ENCODE measurements at regions of chr4 and their contacts with region 1.

Region 1: GRCh38 chr4:113750296-113750695 is 11.2 kb downstream of the CAMK2D start:
- DNase-seq: no peak
- ATAC-seq: no peak
- H3K4me3 ChIP-seq: no peak overlapping the region
- H3K4me3 Mint-ChIP-seq: no peak overlapping the region
- H3K27ac ChIP-seq: no peak overlapping the region
- H3K27ac Mint-ChIP-seq: no peak overlapping the region
- H3K4me1 ChIP-seq: peaks cover under 1% of the 10 kb centered on the region
- H3K4me1 Mint-ChIP-seq: peaks cover 34% of the 10 kb centered on the region
- H3K27me3 ChIP-seq: no peaks in the 10 kb centered on the region
- H3K27me3 Mint-ChIP-seq: no peaks in the 10 kb centered on the region
- CTCF ChIP-seq: no peak

Region 2: GRCh38 chr4:113339430-113339813 is 410.9 kb before region 1 on chr4:
- CTCF ChIA-PET with region 1: no interaction called
- POLR2A ChIA-PET with region 1: no interaction called
- intact Hi-C with region 1: no loop called
- DNase-seq: no peak
- ATAC-seq: no peak
- H3K4me3 ChIP-seq: no peak overlapping the region
- H3K4me3 Mint-ChIP-seq: no peak overlapping the region
- H3K27ac ChIP-seq: no peak overlapping the region
- H3K27ac Mint-ChIP-seq: no peak overlapping the region
- H3K4me1 ChIP-seq: no peaks in the 10 kb centered on the region
- H3K4me1 Mint-ChIP-seq: no peaks in the 10 kb centered on the region
- H3K27me3 ChIP-seq: peaks cover 0 to 2% of the 10 kb centered on the region in 2 experiments
- H3K27me3 Mint-ChIP-seq: peaks cover 6% of the 10 kb centered on the region
- CTCF ChIP-seq: no peak

Region 3: DNA sequence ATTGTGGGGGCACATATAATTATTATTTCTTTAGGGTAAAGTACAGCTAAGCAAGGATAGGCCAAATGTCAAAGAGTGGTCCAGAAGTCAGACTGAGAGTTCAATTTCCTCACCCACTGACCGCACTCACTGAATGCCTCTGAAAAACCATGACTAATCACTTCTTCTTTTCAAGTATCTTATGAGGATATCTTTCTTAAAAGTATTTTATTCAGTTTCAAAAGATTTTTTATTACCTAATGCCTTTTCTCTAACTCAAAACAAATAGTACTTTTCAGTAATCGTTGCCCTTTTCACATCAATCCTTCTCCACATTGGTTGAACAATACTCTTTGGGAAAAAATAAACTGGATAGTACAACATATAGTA is 73.0 kb after region 1 on chr4:
- CTCF ChIA-PET with region 1: no interaction called
- POLR2A ChIA-PET with region 1: no interaction called
- intact Hi-C with region 1: loop called in 1 of 2 experiments (anchors 2 kb)
- DNase-seq: peak in 1 of 9 experiments; percentile 9
- ATAC-seq: no peak
- H3K4me3 ChIP-seq: no peak overlapping the region
- H3K4me3 Mint-ChIP-seq: no peak overlapping the region
- H3K27ac ChIP-seq: no peak overlapping the region
- H3K27ac Mint-ChIP-seq: no peak overlapping the region
- H3K4me1 ChIP-seq: peaks cover 19% of the 10 kb centered on the region
- H3K4me1 Mint-ChIP-seq: peaks cover 30% of the 10 kb centered on the region
- H3K27me3 ChIP-seq: no peaks in the 10 kb centered on the region
- H3K27me3 Mint-ChIP-seq: no peaks in the 10 kb centered on the region
- CTCF ChIP-seq: no peak

Measured in CD8-positive, alpha-beta T cell (primary cell).